ENCODE measurements at regions of chr2 and their contacts with region 1.

Region 1: DNA sequence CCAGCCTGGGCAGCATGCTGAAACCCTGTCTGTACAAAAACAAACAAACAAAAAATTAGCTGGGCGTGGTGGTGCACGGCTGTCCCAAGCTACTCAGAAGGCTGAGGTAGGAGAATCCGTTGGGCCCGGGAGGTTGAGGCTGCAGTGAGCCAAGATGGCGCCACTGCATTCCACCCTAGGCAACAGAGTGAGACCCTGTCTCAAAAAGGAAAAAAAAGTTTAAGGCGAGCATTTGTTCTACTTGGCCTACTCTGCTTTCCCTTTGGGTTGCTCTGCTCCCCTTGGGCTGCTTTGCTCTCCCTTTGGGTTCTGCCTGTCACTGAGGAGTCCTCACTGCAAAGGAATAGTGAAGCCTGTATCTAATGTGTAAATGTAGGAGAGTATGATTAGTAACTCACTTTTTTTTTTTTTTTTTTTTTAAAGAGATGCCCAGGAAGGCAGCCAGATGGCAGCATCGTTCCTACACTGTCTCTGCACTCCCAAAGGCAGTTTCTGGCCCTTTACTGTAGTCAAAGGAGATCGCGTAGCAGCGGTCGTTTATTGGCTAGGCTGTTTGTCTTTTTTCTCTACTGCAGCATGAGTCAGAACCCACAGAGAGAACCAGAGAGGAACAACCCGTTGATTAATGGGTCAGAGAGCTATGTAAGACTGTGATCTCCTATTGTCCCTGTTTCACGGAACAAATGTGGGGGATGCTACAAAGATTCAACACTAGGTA is 118.3 kb upstream of the CWC22 start:
- DNase-seq: peak; percentile 59 to 82 (median 66)
- ATAC-seq: peak; percentile 96 to 97
- H3K4me3 ChIP-seq: no peak overlapping the region
- H3K27ac ChIP-seq: no peak overlapping the region
- H3K4me1 ChIP-seq: no peaks in the 10 kb centered on the region
- H3K27me3 ChIP-seq: no peaks in the 10 kb centered on the region

Region 2: GRCh38 chr2:180071797-180072196 is 53.6 kb before region 1 on chr2:
- intact Hi-C with region 1: no loop called
- DNase-seq: peak in 1 of 3 donors; percentile 18
- ATAC-seq: no peak
- H3K4me3 ChIP-seq: no peak overlapping the region
- H3K27ac ChIP-seq: no peak overlapping the region
- H3K4me1 ChIP-seq: no peaks in the 10 kb centered on the region
- H3K27me3 ChIP-seq: no peaks in the 10 kb centered on the region

Region 3: GRCh38 chr2:180110469-180110868 is 14.9 kb before region 1 on chr2:
- intact Hi-C with region 1: no loop called
- DNase-seq: no peak
- ATAC-seq: no peak
- H3K4me3 ChIP-seq: no peak overlapping the region
- H3K27ac ChIP-seq: no peak overlapping the region
- H3K4me1 ChIP-seq: no peaks in the 10 kb centered on the region
- H3K27me3 ChIP-seq: peaks cover 2% of the 10 kb centered on the region

Region 4: DNA sequence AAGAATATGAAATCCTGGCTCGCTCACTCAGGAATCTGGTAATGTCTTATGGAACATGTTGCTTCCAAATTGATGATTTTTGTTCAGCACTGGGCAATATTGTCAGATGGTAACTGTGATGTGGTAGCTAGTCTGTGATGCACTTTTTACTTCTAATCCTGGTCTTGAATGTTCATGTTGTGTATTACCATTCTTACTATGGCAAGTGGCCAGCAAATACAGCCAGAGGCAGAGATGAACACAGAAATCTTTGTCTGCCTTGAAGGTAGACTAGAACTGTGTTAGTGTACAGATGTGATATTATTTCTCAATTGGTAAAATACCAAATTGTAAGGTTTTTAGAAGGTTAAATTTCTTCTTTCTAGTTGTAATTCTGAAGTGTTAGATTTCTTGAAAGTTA is 938.3 kb after region 1 on chr2:
- intact Hi-C with region 1: loop called in 1 of 4 experiments (anchors 10 kb)
- DNase-seq: no peak
- ATAC-seq: no peak
- H3K4me3 ChIP-seq: no peak overlapping the region
- H3K27ac ChIP-seq: no peak overlapping the region
- H3K4me1 ChIP-seq: no peaks in the 10 kb centered on the region
- H3K27me3 ChIP-seq: no peaks in the 10 kb centered on the region

Region 5: DNA sequence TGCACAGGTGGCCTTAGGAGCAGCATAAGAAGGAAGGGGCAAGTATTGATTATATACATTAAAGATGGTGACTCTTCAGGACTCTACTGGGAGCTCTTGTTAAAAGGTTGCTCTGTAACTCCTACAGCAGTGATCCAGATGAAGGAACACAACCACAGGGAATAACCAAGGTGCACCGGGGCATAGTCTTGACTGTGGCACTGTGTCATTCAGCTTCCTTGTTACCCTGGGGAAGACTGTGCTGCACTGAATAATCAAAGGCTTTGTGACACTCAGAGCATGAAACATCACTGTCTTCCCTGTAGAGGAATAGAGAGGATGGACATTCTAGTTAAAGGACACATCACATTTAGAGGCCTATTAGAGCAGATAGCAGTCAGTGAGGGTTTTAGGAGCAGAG is 960.3 kb after region 1 on chr2:
- intact Hi-C with region 1: loop called in 1 of 4 experiments (anchors 10 kb)
- DNase-seq: no peak
- ATAC-seq: no peak
- H3K4me3 ChIP-seq: no peak overlapping the region
- H3K27ac ChIP-seq: no peak overlapping the region
- H3K4me1 ChIP-seq: no peaks in the 10 kb centered on the region
- H3K27me3 ChIP-seq: no peaks in the 10 kb centered on the region

Region 6: DNA sequence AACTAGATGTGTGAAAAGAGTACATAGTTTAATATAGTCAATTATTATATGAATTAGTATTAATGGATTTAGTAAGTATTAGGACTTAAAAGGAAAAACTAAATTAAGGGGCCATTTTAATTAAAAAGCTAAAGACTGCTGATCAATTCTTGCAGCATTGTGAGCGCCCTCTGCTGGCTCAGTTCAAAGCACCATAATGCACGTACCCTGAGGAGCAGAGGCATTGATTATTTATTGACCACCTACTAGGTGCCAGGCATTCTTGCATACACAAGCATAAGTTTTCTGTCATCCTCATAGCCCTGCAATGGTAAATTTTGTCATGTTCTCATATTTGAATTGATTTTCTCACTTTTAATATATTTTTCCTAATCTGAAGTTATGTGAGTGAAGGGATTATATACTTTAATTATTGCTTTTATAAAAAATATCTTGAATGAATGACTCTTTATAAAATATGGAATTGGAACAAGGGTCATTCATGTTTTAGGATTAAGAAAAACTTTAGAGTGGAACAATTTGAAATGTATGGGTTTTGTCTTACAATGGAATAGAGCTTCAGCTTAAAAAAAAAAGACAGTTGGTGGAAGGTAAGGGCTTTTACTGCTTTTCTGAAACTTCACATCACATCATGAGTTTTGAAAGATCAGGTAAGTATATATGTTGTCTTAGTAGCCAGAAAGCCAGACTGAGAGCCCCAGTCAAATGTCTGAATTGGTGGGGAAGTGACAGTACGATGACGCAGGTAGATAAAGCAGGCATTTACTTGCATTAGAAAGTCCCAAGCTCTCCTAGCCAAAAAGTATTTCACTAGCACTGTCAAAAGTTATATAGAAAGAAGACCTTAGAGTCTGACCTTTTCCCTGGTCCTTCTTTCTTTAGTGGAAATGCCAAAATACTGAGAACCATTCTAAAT is 1341.5 kb after region 1 on chr2:
- intact Hi-C with region 1: loop called in 3 of 4 experiments (anchors 5 to 10 kb)
- DNase-seq: peak; percentile 60 to 91 (median 76)
- ATAC-seq: no peak
- H3K4me3 ChIP-seq: no peak overlapping the region
- H3K27ac ChIP-seq: no peak overlapping the region
- H3K4me1 ChIP-seq: peaks cover 1% of the 10 kb centered on the region
- H3K27me3 ChIP-seq: no peaks in the 10 kb centered on the region

Region 7: DNA sequence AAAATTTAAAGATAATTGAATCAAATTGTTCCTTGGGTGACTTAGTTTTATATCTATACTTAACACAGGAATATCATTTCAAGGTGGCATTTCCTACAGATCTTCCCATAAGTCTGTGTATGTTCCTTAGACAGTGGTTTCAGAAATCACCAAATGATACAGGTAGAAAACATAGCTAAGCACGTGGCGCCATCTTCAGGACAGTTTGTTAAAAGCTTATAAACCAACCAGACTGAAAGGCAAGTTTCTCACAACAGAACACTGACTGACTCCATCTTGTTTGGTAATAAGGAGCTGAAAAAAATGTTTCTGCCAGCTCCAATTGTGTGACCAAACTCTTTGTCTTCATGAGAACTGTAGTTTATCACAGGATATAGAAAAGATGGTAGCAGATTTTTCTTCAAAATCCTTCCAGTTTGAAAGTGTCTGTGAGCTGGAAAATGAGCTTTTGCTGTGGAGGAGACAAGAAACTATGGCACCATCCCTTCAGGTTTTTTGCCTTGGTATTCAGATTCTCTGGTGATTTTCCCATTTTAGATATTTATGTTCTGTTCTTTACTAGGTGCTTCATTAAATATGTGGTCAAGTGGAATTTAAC is 1589.7 kb after region 1 on chr2:
- intact Hi-C with region 1: loop called in 3 of 4 experiments (anchors 5 to 10 kb)
- DNase-seq: peak; percentile 49 to 73 (median 54)
- ATAC-seq: peak; percentile 54 to 63
- H3K4me3 ChIP-seq: no peak overlapping the region
- H3K27ac ChIP-seq: no peak overlapping the region
- H3K4me1 ChIP-seq: no peaks in the 10 kb centered on the region
- H3K27me3 ChIP-seq: peaks cover 2% of the 10 kb centered on the region